Mammary epithelial cell (primary cell): ENCODE measurements at regions of chr6 and their contacts with region 1.

Region 1: GRCh38 chr6:5670811-5671561 is 335.7 kb downstream of the NRN1 start:
- DNase-seq: peak; percentile 32
- H3K4me3 ChIP-seq: no peak overlapping the region
- H3K27ac ChIP-seq: peak overlapping the region; percentile 76
- H3K4me1 ChIP-seq: peaks cover 35% of the 10 kb centered on the region
- H3K27me3 ChIP-seq: no peaks in the 10 kb centered on the region
- CTCF ChIP-seq: no peak

Region 2: GRCh38 chr6:5878792-5879191 is 207.8 kb after region 1 on chr6:
- CTCF ChIA-PET with region 1: no interaction called
- dilution Hi-C with region 1: no loop called
- in situ Hi-C with region 1: no loop called
- intact Hi-C with region 1: no loop called
- DNase-seq: no peak
- H3K4me3 ChIP-seq: no peak overlapping the region
- H3K27ac ChIP-seq: no peak overlapping the region
- H3K4me1 ChIP-seq: no peaks in the 10 kb centered on the region
- H3K27me3 ChIP-seq: no peaks in the 10 kb centered on the region
- CTCF ChIP-seq: no peak

Region 3: DNA sequence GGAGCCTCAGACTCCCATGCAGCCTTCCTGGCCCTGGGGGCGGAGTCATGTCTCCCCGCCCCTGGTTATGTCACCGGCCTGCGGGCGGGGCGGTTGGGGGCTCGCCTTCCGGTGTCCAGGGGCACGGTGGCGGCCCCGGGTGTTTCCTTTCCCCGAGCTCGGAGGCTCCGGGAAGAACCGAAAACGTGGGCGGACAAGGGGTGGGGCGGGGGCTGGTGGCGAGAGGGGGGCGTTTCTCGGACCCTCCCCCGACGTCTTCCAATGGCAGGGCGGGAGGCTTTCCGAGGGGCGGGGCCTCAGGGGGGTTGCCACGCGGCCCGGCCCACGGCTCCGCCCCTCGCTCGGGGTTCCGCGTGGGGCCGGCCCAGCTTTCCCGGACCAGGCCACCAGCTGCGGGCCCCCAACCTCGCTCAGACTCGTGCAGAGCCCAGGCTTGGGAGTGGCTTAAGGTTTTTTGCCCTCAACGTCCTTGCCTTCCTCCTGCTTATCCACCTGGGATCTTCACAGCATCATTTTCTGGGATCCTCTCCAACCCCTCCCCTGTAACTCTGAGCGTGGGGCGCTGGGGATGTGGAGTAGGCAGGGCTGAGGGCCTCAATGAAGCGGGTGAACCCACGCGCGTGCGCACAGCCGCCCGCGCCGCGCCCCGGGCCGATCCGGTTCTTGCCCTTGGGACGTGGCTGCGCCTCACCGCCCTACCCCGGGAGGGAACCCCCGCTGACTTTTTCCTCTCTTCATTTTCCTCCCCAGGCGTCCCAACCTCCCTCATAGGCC is 337.8 kb after region 1 on chr6:
- CTCF ChIA-PET with region 1: no interaction called
- dilution Hi-C with region 1: no loop called
- in situ Hi-C with region 1: no loop called
- intact Hi-C with region 1: loop called (anchors 10 kb)
- DNase-seq: peak; percentile 80
- H3K4me3 ChIP-seq: peak overlapping the region in 2 of 3 experiments; percentile 2 to 25
- H3K27ac ChIP-seq: no peak overlapping the region
- H3K4me1 ChIP-seq: peaks cover 10% of the 10 kb centered on the region
- H3K27me3 ChIP-seq: peaks cover 55% of the 10 kb centered on the region
- CTCF ChIP-seq: no peak